ENCODE measurements at regions of chr14 and their contacts with region 1.

Region 1: DNA sequence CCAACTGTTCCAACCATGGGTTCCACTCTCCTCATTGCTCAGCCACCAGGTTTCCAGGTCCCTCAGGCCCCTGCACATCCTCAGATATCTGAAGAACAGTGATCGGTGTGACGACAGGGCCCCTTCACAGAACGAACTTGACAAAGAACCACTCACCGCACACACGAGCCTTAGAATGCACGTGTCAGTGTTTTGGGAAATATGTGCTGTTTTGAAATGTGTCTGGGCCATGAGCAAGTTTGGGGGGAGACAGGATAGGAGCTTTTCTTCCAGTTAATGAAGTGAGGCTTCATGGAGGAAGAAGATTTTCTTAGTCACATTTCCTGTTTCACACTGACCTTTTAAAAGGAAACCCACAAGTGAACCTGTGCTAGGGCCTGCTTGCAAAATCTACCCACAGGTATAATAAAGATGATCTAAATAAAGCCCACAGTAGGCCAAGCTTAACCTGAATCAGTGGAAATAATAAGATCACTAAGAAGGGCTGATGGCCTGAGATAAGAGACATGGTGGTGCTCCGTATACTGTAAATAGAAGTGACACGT is 58.6 kb downstream of the ZFP36L1 start:
- DNase-seq: no peak
- ATAC-seq: peak; percentile 74
- H3K4me3 Mint-ChIP-seq: peak overlapping the region; percentile 39
- H3K27ac Mint-ChIP-seq: peak overlapping the region; percentile 82
- H3K4me1 Mint-ChIP-seq: peaks cover 78% of the 10 kb centered on the region
- H3K27me3 Mint-ChIP-seq: no peaks in the 10 kb centered on the region
- CTCF ChIP-seq: no peak

Region 2: DNA sequence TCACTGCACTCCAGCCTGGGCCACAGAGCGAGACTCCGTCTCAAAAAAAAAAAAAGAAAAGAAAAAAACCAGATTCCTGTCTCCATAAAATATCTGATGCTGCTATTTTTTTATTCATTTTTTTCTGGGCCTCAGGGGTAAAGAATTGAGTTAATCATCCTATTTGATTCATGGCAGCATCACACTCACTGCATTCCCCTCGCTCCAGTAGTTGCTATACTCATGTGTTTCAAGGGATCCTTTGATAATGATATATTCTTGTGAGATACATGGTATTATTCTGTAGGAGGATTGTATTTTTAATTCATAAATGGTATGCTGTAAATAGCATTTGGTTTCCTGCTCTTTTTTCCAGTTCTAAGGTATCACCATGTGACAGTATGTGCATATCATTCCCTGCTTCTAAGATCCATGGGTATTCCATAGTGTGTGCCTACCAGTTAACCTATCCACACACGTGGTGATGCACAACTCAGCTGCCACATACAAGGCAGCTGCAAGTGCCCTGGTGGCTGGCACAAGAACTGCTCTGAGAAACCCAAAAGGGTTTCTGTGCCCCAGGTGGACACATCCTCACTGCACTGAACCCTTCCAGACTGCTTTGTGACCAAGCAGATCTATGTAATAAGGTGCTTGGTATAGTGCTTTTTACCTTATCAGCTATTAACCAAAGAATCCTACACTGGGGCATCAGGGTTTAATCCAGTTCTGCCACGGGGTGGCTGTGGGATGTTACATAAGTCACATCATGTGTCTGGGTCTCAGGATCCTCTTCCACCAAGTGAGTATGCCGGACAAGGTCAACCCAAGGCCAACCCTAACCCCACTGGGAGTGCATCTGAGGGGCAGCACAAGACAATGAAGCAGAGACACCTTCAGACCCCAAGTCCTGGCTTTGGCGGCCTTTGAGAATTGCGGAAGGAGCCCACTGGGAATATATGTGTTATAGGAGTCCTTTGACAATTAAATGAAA is 16.0 kb before region 1 on chr14:
- CTCF ChIA-PET with region 1: interaction called, 6 read pairs
- POLR2A ChIA-PET with region 1: interaction called, 6 read pairs
- intact Hi-C with region 1: loop called (anchors 2 kb)
- DNase-seq: no peak
- ATAC-seq: peak; percentile 69
- H3K4me3 Mint-ChIP-seq: no peak overlapping the region
- H3K27ac Mint-ChIP-seq: no peak overlapping the region
- H3K4me1 Mint-ChIP-seq: peaks cover 19% of the 10 kb centered on the region
- H3K27me3 Mint-ChIP-seq: no peaks in the 10 kb centered on the region
- CTCF ChIP-seq: no peak

Region 3: DNA sequence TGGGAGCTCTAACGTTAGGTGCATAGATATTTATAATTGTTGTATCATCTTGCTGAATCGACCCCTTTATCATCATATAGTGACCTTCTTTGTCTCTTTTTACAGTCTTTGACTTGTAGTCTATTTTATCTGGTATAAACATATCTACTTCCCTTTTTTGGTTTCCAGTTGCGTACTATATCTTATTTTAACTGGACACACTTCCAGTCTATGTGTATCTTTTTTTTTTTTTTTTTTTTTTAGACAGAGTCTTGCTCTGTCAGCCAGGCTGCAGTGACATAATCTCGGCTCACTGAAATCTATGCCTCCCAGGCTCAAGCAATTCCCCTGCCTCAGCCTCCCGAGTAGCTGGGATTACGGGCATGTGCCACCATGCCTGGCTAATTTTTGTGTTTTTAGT is 100.5 kb after region 1 on chr14:
- CTCF ChIA-PET with region 1: no interaction called
- POLR2A ChIA-PET with region 1: no interaction called
- intact Hi-C with region 1: no loop called
- DNase-seq: no peak
- ATAC-seq: peak; percentile 67
- H3K4me3 Mint-ChIP-seq: no peak overlapping the region
- H3K27ac Mint-ChIP-seq: no peak overlapping the region
- H3K4me1 Mint-ChIP-seq: peaks cover 18% of the 10 kb centered on the region
- H3K27me3 Mint-ChIP-seq: no peaks in the 10 kb centered on the region
- CTCF ChIP-seq: no peak